SK-N-SH (cell line): ENCODE measurements at regions of chr3 and their contacts with region 1.

Region 1: GRCh38 chr3:39447637-39448483 is 19.6 kb upstream of the MOBP start:
- DNase-seq: peak; percentile 78
- H3K4me3 ChIP-seq: no peak overlapping the region
- H3K27ac ChIP-seq: no peak overlapping the region
- H3K4me1 ChIP-seq: peaks cover 0 to 2% of the 10 kb centered on the region in 2 experiments; a peak in 1 of 4 replicates
- H3K27me3 ChIP-seq: no peaks in the 10 kb centered on the region
- CTCF ChIP-seq: peak; percentile 94
- EP300 ChIP-seq: no peak
- RAD21 ChIP-seq: peak; percentile 82

Region 2: DNA sequence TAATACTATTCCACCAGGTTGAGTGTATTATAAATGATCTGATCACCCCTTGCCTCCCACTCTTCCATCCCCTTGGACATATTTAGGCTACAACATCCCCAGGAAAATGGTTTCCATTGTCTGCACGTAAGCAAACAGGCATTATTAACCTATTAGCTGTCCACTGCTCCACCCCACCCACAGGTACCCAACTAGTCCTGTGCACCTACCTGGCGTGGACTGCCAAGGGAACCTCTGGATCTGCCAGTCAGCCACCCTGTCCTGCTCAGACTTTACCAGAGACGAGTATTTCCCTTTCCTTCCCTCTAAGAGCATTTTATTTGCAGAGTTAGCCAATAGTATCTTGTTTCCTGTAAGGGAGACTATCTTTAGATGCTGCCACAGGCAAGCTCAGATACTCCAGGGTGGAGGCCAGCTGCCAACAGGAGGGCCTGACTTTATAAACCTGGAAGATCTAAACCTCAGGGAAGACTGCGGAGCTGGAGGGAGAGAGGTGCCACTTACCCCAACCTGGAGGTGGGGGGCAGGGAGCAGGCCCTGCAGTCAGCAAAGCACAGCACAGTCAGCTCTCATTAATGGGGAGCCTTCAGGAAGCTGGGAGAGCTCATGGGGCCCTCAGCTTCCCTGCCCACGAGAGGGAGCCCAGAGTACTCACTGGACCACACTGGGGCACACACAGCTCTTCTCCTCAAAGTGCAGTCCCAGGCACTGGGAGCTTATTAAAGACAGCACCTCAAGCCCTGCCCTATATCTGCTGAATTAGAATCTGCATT is 167.9 kb before region 1 on chr3 and contains the start of gene CX3CR1:
- CTCF ChIA-PET with region 1: no interaction called
- POLR2A ChIA-PET with region 1: no interaction called
- DNase-seq: no peak
- H3K4me3 ChIP-seq: no peak within 1 kb of the TSS
- H3K27ac ChIP-seq: no peak within 1 kb of the TSS
- H3K4me1 ChIP-seq: no peaks in the 10 kb centered on the region
- H3K27me3 ChIP-seq: peaks cover 8% of the 10 kb centered on the region; the same call in 1 of the 2 replicates
- CTCF ChIP-seq: no peak
- EP300 ChIP-seq: no peak
- RAD21 ChIP-seq: no peak
- polyA plus RNA-seq, gene CX3CR1: not detected in 2 replicates

Region 3: DNA sequence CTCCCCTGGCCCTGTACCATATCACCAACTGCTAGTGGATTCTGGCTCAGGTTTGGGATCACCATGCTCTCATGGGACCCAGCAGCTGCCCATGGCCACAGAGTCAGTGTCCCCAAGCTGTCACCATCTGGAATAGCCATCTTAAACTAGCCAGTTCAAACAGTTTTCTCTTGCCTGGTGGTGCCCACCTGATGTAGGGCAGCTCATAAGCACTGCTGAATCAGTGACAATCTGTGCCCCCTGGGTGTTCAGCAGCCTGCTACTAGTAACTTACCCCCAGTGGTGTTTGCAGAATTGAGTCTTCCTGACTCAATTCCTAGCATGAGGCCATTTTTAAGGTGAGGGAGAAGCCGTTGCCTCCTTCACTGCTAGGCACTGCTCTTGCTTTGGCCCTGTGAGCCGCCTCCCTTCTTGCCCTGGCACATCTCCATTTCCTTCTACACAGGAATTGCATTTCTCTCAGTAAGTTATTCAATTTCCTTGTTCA is 33.4 kb before region 1 on chr3:
- CTCF ChIA-PET with region 1: interaction called, 45 read pairs
- POLR2A ChIA-PET with region 1: no interaction called
- DNase-seq: no peak
- H3K4me3 ChIP-seq: no peak overlapping the region
- H3K27ac ChIP-seq: peak overlapping the region; percentile 31 to 55; a peak in 3 of 4 replicates
- H3K4me1 ChIP-seq: peaks cover 0 to 9% of the 10 kb centered on the region in 2 experiments; a peak in 1 of 4 replicates
- H3K27me3 ChIP-seq: no peaks in the 10 kb centered on the region
- CTCF ChIP-seq: no peak
- EP300 ChIP-seq: no peak
- RAD21 ChIP-seq: no peak

Region 4: DNA sequence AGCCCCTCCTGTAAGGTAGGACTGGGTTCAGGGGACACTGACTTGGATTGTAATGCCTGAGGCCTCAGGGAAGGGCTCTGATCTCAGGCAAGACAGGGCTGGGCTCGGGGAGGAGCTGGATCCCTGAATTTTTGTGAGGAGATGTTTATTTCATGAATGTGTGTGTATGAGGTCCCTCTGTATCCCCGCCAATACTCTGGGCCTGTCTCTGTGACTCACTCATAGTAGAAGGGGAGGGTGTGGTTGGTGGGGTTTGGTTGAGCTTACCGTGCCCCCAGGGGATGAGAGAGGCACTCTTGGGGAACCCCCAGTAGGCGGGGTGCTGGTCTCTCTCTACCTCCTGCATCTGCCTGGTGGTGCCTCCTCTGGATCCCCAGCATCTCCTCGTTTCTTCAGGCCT is 13.3 kb before region 1 on chr3:
- CTCF ChIA-PET with region 1: interaction called, 16 read pairs
- POLR2A ChIA-PET with region 1: no interaction called
- DNase-seq: no peak
- H3K4me3 ChIP-seq: no peak overlapping the region
- H3K27ac ChIP-seq: no peak overlapping the region
- H3K4me1 ChIP-seq: peaks cover 0 to 14% of the 10 kb centered on the region in 2 experiments; a peak in 1 of 4 replicates
- H3K27me3 ChIP-seq: no peaks in the 10 kb centered on the region
- CTCF ChIP-seq: no peak
- EP300 ChIP-seq: no peak
- RAD21 ChIP-seq: no peak

Region 5: GRCh38 chr3:39473452-39474127 is 25.7 kb after region 1 on chr3:
- CTCF ChIA-PET with region 1: interaction called, 14 read pairs
- POLR2A ChIA-PET with region 1: no interaction called
- DNase-seq: no peak
- H3K4me3 ChIP-seq: no peak overlapping the region
- H3K27ac ChIP-seq: no peak overlapping the region
- H3K4me1 ChIP-seq: no peaks in the 10 kb centered on the region; a peak in 1 of 4 replicates
- H3K27me3 ChIP-seq: no peaks in the 10 kb centered on the region
- CTCF ChIP-seq: no peak
- EP300 ChIP-seq: no peak
- RAD21 ChIP-seq: no peak

Region 6: DNA sequence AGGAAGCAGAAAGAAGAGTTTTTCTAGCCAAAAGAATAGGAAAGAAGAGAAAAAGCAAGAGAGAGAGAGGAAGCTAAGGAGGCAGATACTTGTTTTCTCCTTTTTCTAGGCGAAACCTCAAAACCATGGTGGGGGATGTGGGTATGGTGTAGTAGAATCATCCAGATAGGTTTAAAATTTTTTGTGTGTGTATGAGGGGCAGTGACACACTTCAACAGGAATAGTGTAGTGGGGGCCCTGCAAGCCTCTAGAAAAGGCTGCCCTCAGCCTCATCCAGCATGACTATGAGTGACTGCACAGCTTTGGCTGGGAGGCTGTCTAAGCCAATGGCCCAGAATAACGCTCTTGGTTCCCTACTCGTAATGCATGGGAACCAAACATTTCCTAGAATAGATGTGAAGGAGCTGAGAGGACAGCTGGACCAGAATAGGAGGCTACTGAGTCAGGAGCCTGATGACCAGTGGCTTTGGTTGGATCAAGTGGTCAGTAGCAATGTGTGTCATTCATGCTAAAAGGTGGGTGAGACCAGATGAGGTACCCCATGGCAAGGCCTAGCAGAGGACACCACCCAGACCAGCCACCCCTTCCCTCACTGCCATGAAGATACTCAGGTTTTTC is 44.0 kb after region 1 on chr3:
- CTCF ChIA-PET with region 1: interaction called, 145 read pairs
- POLR2A ChIA-PET with region 1: no interaction called
- DNase-seq: no peak
- H3K4me3 ChIP-seq: no peak overlapping the region
- H3K27ac ChIP-seq: no peak overlapping the region
- H3K4me1 ChIP-seq: no peaks in the 10 kb centered on the region
- H3K27me3 ChIP-seq: no peaks in the 10 kb centered on the region
- CTCF ChIP-seq: no peak
- EP300 ChIP-seq: no peak
- RAD21 ChIP-seq: no peak